A549 (cell line): ENCODE measurements at regions of chr5 and their contacts with region 1.

Region 1: DNA sequence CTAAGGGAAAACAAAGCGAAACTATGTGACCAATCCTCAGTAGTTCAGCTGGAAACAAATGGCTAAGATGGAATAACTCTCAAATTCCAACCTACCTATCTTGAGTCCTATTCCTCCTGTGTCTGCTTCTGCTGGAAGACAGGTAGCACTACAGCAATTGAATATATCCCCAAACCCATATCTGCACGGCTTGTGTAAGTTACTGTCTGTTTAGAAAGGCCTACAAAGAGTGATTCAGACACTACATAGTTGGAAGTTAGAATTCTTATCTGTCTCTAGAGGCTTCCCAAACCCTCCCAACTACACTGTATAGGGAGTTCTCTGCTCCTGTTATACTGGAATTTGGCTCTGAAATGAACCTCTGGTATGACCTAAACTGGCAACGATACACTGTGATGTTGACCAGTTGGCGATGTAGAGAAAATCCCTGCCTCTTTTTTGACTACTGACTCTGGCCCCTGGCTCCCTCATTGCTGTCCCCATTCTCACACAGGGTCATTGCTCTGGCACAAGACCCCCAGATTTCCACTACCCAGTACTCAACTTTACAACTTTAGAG is 22.6 kb upstream of the NADK2 start:
- DNase-seq: no peak
- ATAC-seq: 0 out of 6 replicates have a peak, but pooled peaks of 1 of the 2 experiments have one; percentile 39
- H3K4me3 ChIP-seq: no peak overlapping the region
- H3K27ac ChIP-seq: no peak overlapping the region
- H3K4me1 ChIP-seq: no peaks in the 10 kb centered on the region
- CTCF ChIP-seq: no peak
- EP300 ChIP-seq: no peak
- POLR2A ChIP-seq: no peak
- RAD21 ChIP-seq: no peak

Region 2: DNA sequence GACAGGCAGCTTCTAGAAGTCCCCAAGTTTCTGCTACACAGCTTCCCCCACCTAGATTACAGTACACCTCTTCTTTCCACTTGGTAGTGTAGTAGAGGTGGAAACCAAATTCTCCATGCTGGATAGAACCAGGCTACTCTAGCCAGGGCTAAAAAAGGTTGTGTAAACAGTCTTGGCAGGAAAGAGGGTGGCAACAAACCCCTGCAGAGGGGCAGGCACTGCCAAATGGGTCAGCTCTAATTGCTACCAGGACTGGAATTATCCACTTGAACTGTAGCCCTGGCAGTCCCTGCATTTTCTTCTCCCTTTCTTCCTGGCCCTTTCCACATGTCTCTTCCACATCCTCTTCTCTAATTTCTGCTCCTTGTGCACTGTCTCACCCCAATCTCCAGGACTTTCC is 12.6 kb after region 1 on chr5:
- CTCF ChIA-PET with region 1: interaction called, 13 read pairs
- POLR2A ChIA-PET with region 1: no interaction called
- DNase-seq: no peak
- ATAC-seq: no peak
- H3K4me3 ChIP-seq: no peak overlapping the region
- H3K27ac ChIP-seq: no peak overlapping the region
- H3K4me1 ChIP-seq: no peaks in the 10 kb centered on the region
- CTCF ChIP-seq: no peak
- EP300 ChIP-seq: no peak
- POLR2A ChIP-seq: no peak
- RAD21 ChIP-seq: no peak